Natural killer cell (primary cell): ENCODE measurements at regions of chr12 and their contacts with region 1.

Region 1: DNA sequence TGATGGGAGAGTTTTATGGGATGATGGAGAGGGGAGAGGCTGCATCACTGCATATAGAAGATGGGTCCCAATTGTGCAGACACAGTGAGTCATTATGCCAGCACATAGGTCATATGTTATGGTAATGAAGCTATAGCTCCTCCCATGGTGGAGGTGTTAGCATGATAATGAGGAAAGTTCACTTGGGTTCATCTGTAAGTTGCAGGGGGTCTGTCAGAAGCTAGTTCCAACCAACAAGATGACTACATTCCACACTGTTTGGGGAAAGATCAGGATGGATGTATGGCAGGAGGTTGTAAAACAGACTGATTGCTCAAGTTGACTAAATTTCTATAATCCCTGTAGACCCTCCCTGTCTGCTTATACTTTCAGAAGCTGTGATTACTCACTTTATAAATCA is 561.3 kb downstream of the C12orf50 start:
- DNase-seq: no peak
- ATAC-seq: no peak
- H3K4me3 ChIP-seq: no peak overlapping the region
- H3K4me3 Mint-ChIP-seq: no peak overlapping the region
- H3K27ac ChIP-seq: no peak overlapping the region
- H3K27ac Mint-ChIP-seq: no peak overlapping the region
- H3K4me1 ChIP-seq: no peaks in the 10 kb centered on the region
- H3K4me1 Mint-ChIP-seq: no peaks in the 10 kb centered on the region
- H3K27me3 ChIP-seq: no peaks in the 10 kb centered on the region
- H3K27me3 Mint-ChIP-seq: no peaks in the 10 kb centered on the region
- CTCF ChIP-seq: no peak

Region 2: GRCh38 chr12:87405918-87406317 is 62.0 kb before region 1 on chr12:
- intact Hi-C with region 1: no loop called
- DNase-seq: no peak
- ATAC-seq: no peak
- H3K4me3 ChIP-seq: no peak overlapping the region
- H3K4me3 Mint-ChIP-seq: no peak overlapping the region
- H3K27ac ChIP-seq: no peak overlapping the region
- H3K27ac Mint-ChIP-seq: no peak overlapping the region
- H3K4me1 ChIP-seq: no peaks in the 10 kb centered on the region
- H3K4me1 Mint-ChIP-seq: no peaks in the 10 kb centered on the region
- H3K27me3 ChIP-seq: no peaks in the 10 kb centered on the region
- H3K27me3 Mint-ChIP-seq: no peaks in the 10 kb centered on the region
- CTCF ChIP-seq: no peak

Region 3: DNA sequence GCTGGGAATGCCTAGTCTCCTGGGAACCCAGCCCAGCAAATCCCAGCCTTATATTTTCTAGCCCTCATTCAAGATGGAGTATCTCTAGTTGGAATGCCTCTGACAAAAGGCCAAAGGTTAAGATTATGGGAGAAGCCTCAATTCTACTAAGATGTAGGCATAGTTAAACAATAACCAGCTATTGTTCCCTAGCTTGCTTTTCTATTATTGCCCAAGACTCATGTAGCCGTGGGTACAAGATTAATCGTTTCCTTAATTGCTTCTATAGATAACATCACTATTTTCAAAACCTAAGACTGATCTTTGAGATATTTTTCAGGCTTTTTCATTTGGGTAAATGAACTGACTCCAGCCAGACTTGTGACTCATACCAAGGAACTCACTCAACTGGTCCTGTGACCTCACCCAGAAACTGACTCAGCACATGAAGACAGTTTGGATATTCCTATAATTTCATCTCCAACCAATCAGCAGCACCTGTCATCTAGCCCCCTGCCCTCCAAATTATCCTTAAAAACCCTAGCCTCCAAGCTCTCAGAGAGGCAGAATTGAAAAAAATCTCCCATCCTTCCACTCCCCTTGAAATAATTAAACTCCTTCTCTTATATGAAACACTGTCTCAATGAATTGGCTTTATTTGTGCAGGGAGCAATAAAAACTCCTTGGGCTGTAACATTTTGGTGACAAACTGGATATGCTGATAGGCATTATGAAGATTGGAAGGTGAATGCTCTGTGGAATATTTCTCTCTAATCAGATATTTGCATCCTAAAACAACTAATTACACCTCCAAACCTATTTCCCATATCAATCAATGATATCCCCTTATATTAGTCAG is 27.7 kb before region 1 on chr12:
- intact Hi-C with region 1: loop called (anchors 1 kb)
- DNase-seq: no peak
- ATAC-seq: no peak
- H3K4me3 ChIP-seq: no peak overlapping the region
- H3K4me3 Mint-ChIP-seq: no peak overlapping the region
- H3K27ac ChIP-seq: no peak overlapping the region
- H3K27ac Mint-ChIP-seq: no peak overlapping the region
- H3K4me1 ChIP-seq: no peaks in the 10 kb centered on the region
- H3K4me1 Mint-ChIP-seq: no peaks in the 10 kb centered on the region
- H3K27me3 ChIP-seq: no peaks in the 10 kb centered on the region
- H3K27me3 Mint-ChIP-seq: no peaks in the 10 kb centered on the region
- CTCF ChIP-seq: no peak

Region 4: DNA sequence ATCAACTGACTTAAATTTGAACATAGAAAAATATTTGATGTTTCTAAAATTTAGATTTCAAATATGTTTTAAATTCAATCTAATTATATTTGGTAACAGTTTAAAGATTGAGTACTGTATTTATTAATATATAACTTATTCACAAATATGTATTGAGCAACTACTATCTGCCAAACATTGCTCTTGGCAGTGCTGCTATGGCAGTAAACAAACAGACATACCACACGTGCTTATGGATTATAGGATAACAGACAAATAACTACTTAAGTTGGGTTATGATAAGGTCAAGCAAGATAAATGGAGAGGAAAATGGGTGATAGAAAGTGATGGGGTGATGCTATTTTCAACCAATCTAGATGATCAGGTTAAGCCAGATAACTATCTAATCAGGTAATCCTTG is 23.2 kb after region 1 on chr12:
- intact Hi-C with region 1: no loop called
- DNase-seq: no peak
- ATAC-seq: no peak
- H3K4me3 ChIP-seq: no peak overlapping the region
- H3K4me3 Mint-ChIP-seq: no peak overlapping the region
- H3K27ac ChIP-seq: no peak overlapping the region
- H3K27ac Mint-ChIP-seq: no peak overlapping the region
- H3K4me1 ChIP-seq: no peaks in the 10 kb centered on the region
- H3K4me1 Mint-ChIP-seq: no peaks in the 10 kb centered on the region
- H3K27me3 ChIP-seq: no peaks in the 10 kb centered on the region
- H3K27me3 Mint-ChIP-seq: no peaks in the 10 kb centered on the region
- CTCF ChIP-seq: no peak

Region 5: GRCh38 chr12:87585882-87586557 is 118.1 kb after region 1 on chr12:
- intact Hi-C with region 1: no loop called
- DNase-seq: no peak
- ATAC-seq: no peak
- H3K4me3 ChIP-seq: no peak overlapping the region
- H3K4me3 Mint-ChIP-seq: no peak overlapping the region
- H3K27ac ChIP-seq: no peak overlapping the region
- H3K27ac Mint-ChIP-seq: no peak overlapping the region
- H3K4me1 ChIP-seq: no peaks in the 10 kb centered on the region
- H3K4me1 Mint-ChIP-seq: no peaks in the 10 kb centered on the region
- H3K27me3 ChIP-seq: no peaks in the 10 kb centered on the region
- H3K27me3 Mint-ChIP-seq: no peaks in the 10 kb centered on the region
- CTCF ChIP-seq: no peak